Endothelial cell of umbilical vein (primary cell): ENCODE measurements at regions of chr6 and their contacts with region 1.

Region 1: DNA sequence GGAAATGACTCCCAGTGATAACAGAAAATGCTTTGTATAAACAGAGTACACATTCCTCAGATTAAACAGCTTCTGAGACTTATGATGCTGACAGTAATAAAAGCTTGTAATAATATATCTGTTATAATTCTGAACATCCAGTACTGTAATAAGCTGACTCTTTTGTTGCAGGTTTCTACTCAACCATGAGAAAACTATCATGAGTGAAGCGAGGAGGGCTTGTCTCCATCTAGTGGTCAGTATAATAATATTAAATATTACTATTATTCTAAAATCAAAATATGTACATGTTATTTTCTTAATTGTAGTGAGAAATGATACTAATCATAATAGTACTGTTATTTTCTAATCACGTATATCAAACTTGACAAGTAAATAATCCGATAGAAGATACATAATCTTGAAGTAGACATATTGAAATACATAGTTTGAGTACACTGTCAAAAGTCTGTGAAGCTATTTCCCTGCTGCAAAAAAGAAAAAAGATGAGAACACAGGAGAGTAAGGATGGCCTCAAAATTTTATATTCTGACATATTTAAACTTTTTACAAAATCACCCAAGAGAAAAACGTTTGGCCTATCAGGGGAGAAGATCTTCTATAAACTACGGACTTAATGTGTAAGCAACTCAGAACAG is 183.1 kb downstream of the MOXD1 start:
- DNase-seq: peak; percentile 63
- H3K4me3 ChIP-seq: no peak overlapping the region
- H3K27ac ChIP-seq: no peak overlapping the region
- H3K4me1 ChIP-seq: peaks cover 5% of the 10 kb centered on the region
- H3K27me3 ChIP-seq: no peaks in the 10 kb centered on the region
- CTCF ChIP-seq: peak in 1 of 2 donors; percentile 25
- POLR2A ChIP-seq: no peak

Region 2: GRCh38 chr6:131592935-131593334 is 625.2 kb before region 1 on chr6:
- CTCF ChIA-PET with region 1: no interaction called
- POLR2A ChIA-PET with region 1: no interaction called
- dilution Hi-C with region 1: no loop called
- intact Hi-C with region 1: no loop called
- DNase-seq: no peak
- H3K4me3 ChIP-seq: no peak overlapping the region
- H3K27ac ChIP-seq: no peak overlapping the region
- H3K4me1 ChIP-seq: no peaks in the 10 kb centered on the region
- H3K27me3 ChIP-seq: no peaks in the 10 kb centered on the region
- CTCF ChIP-seq: no peak
- POLR2A ChIP-seq: no peak

Region 3: DNA sequence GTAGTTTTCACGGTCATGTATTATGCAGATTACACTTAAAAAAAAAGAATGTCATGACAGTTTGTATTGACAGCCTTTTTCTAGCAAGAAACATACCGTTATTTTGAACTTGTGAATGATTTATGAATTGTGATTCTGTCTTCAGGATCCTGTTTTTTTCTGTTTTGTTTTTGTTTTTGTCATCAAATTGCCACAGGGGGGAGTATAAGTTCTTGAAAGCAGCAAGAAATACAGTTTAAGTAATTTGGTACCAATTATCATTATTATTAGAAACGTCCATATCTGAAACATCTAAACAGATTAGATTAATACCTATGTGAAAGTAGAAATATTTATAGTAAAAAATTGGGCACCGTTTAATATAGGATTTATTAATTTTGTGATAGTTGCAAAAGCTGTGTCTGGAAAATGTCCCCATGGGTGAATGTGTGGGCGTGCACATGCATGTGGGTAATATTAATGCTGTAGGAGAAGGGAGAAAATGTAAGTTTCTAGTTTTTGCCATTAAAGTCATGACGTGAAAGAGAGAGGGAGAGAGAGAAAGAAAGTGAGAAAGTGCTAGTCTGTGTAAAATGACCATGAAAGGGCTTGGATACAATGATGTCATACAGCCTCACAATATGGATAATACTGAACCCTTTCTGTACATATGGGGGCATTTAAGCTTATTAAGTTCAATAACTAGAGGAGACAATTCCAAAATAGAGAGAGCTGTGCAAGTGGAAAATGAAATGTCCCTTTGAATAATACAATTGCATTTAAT is 257.6 kb before region 1 on chr6:
- CTCF ChIA-PET with region 1: interaction called, 59 read pairs
- POLR2A ChIA-PET with region 1: no interaction called
- dilution Hi-C with region 1: no loop called
- intact Hi-C with region 1: loop called (anchors 1 kb)
- DNase-seq: peak; percentile 76
- H3K4me3 ChIP-seq: no peak overlapping the region
- H3K27ac ChIP-seq: peak overlapping the region; percentile 19
- H3K4me1 ChIP-seq: peaks cover 11% of the 10 kb centered on the region
- H3K27me3 ChIP-seq: no peaks in the 10 kb centered on the region
- CTCF ChIP-seq: peak in 1 of 2 donors; percentile 12
- POLR2A ChIP-seq: no peak

Region 4: DNA sequence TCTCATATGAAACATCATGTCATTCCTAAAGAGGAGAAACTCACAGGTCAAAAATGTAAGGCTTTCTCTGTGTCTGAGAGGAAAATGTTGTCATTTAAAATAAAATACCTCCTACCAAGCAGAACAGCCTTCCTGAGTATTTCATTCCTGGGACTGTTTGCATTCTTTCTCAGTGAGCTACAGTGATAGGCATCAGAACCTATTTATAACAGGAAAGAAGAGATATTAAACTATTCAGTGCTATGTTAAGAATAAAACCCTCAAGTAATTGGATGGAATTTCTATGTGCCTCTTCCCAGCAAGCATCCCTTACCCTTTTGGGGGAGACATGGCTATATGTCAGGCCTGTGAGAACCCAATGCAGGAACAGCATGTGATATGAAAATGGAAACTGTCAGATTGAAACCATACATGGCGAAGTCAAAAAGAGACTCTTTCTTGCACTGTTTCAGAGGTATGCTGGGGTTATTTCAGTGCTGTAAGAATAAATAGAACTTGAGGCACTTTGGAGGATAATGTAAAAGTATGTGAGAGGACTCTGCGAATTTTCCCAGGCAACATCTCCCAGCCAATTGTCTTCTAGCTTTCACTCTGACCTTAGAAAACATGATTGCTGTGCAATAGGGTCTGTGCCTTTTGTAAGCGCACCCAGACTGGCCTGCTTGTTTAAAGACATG is 133.2 kb before region 1 on chr6:
- CTCF ChIA-PET with region 1: interaction called, 12 read pairs
- POLR2A ChIA-PET with region 1: no interaction called
- dilution Hi-C with region 1: no loop called
- intact Hi-C with region 1: loop called (anchors 2 kb)
- DNase-seq: peak; percentile 95
- H3K4me3 ChIP-seq: peak overlapping the region in 1 of 3 experiments; percentile 15
- H3K27ac ChIP-seq: peak overlapping the region; percentile 99
- H3K4me1 ChIP-seq: peaks cover 56% of the 10 kb centered on the region
- H3K27me3 ChIP-seq: no peaks in the 10 kb centered on the region
- CTCF ChIP-seq: no peak
- POLR2A ChIP-seq: peak; percentile 57

Region 5: GRCh38 chr6:132161283-132161682 is 56.9 kb before region 1 on chr6:
- CTCF ChIA-PET with region 1: interaction called, 11 read pairs
- POLR2A ChIA-PET with region 1: no interaction called
- dilution Hi-C with region 1: no loop called
- intact Hi-C with region 1: loop called (anchors 1 kb)
- DNase-seq: peak; percentile 70
- H3K4me3 ChIP-seq: no peak overlapping the region
- H3K27ac ChIP-seq: peak overlapping the region; percentile 5
- H3K4me1 ChIP-seq: peaks cover 7% of the 10 kb centered on the region
- H3K27me3 ChIP-seq: no peaks in the 10 kb centered on the region
- CTCF ChIP-seq: peak; percentile 34 to 41
- POLR2A ChIP-seq: no peak

Region 6: DNA sequence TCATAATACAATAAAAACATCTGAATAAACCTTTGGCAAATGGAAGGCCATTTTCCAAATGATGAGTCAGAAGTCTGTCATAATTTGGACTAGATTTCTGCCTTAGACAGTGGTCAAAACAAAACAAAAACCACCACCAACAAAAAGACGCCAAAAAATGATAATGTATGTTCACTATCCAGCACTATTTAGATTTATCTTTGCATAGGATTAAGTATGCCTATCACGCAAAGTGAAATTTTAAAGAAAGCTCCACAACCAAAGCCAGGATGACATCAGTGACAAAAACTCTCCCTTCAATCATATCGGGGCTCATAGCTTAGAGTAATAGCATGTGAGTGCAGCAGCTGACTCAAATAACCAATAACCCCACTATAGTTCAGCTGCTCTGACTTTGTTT is 18.8 kb before region 1 on chr6:
- CTCF ChIA-PET with region 1: interaction called, 15 read pairs
- POLR2A ChIA-PET with region 1: no interaction called
- dilution Hi-C with region 1: no loop called
- intact Hi-C with region 1: no loop called
- DNase-seq: peak; percentile 32
- H3K4me3 ChIP-seq: no peak overlapping the region
- H3K27ac ChIP-seq: peak overlapping the region; percentile 22
- H3K4me1 ChIP-seq: peaks cover 12% of the 10 kb centered on the region
- H3K27me3 ChIP-seq: no peaks in the 10 kb centered on the region
- CTCF ChIP-seq: no peak
- POLR2A ChIP-seq: no peak